Pancreas (tissue), 10 donors: ENCODE measurements at regions of chr5 and their contacts with region 1.

Region 1: GRCh38 chr5:40755407-40756365 is at the start of gene TTC33:
- DNase-seq: peak; percentile 90 to 96 (median 94)
- ATAC-seq: peak; percentile 97 to 99 (median 98)
- H3K4me3 ChIP-seq: peak within 1 kb of the TSS; percentile 66 to 88 (median 80)
- H3K27ac ChIP-seq: peak within 1 kb of the TSS; percentile 70 to 94 (median 83)
- H3K4me1 ChIP-seq: peaks cover 0 to 6% (median 5%) of the 10 kb centered on the region in 3 donors
- H3K27me3 ChIP-seq: no peaks in the 10 kb centered on the region
- CTCF ChIP-seq: peak; percentile 23 to 57 (median 43)
- total RNA-seq, gene TTC33: 4.3 to 8.7 (median 6.0) TPM

Region 2: DNA sequence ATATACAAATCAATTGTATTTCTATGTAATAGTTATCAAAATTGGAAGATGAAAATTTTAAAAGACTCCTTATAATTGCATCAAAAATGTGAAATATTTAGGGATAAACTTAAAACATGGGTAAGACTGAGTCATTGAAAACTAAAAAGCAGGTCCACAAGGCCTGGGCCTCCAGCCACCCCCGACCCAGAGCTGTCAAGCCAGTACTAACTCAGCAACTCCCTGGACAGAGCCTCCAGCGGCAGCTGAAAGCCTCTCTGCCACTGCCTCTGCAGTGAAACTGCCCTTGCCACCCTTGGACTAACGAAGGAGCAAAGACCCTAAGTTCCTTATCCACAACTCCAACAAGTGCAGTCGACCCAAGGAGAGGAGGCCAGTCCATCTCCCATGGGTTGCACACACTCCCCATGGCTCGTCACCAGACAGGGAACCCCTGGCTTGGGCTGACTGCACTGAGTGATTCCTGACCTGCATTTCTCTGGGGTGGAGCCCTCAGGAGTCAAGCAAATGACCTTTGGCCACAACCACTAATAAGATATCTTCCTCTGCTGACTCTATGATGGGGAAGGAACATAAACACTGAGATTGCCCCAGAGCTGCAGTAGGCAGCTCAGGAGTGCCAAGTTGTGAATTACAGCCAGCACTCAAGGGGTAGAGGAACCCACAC is 55.4 kb before region 1 on chr5:
- intact Hi-C with region 1: no loop called
- DNase-seq: no peak
- ATAC-seq: no peak
- H3K4me3 ChIP-seq: no peak overlapping the region
- H3K27ac ChIP-seq: no peak overlapping the region
- H3K4me1 ChIP-seq: no peaks in the 10 kb centered on the region
- H3K27me3 ChIP-seq: no peaks in the 10 kb centered on the region
- CTCF ChIP-seq: no peak

Region 3: GRCh38 chr5:40879163-40879942 is 123.7 kb after region 1 on chr5:
- intact Hi-C with region 1: loop called in 1 of 3 experiments (anchors 10 kb)
- DNase-seq: no peak
- ATAC-seq: peak; percentile 43 to 75 (median 66)
- H3K4me3 ChIP-seq: no peak overlapping the region
- H3K27ac ChIP-seq: no peak overlapping the region
- H3K4me1 ChIP-seq: no peaks in the 10 kb centered on the region
- H3K27me3 ChIP-seq: no peaks in the 10 kb centered on the region
- CTCF ChIP-seq: peak; percentile 10 to 54 (median 40)

Region 4: GRCh38 chr5:41043109-41043747 is 287.5 kb after region 1 on chr5:
- intact Hi-C with region 1: no loop called
- DNase-seq: no peak
- ATAC-seq: no peak
- H3K4me3 ChIP-seq: no peak overlapping the region
- H3K27ac ChIP-seq: no peak overlapping the region
- H3K4me1 ChIP-seq: no peaks in the 10 kb centered on the region
- H3K27me3 ChIP-seq: no peaks in the 10 kb centered on the region
- CTCF ChIP-seq: no peak